GM12878 (cell line): ENCODE measurements at regions of chr11 and their contacts with region 1.

Region 1: GRCh38 chr11:110026858-110027626 is 66.2 kb upstream of the ZC3H12C start:
- DNase-seq: peak; percentile 99
- ATAC-seq: peak; percentile 87
- H3K4me3 ChIP-seq: peak overlapping the region; percentile 23; the same call in 1 of the 2 replicates
- H3K27ac ChIP-seq: peak overlapping the region; percentile 91
- H3K4me1 ChIP-seq: peaks cover 33% of the 10 kb centered on the region
- H3K27me3 ChIP-seq: no peaks in the 10 kb centered on the region
- CTCF ChIP-seq: no peak
- EP300 ChIP-seq: peak; percentile 99
- POLR2A ChIP-seq: no peak
- RAD21 ChIP-seq: peak; percentile 29; the same call in 1 of the 2 replicates

Region 2: DNA sequence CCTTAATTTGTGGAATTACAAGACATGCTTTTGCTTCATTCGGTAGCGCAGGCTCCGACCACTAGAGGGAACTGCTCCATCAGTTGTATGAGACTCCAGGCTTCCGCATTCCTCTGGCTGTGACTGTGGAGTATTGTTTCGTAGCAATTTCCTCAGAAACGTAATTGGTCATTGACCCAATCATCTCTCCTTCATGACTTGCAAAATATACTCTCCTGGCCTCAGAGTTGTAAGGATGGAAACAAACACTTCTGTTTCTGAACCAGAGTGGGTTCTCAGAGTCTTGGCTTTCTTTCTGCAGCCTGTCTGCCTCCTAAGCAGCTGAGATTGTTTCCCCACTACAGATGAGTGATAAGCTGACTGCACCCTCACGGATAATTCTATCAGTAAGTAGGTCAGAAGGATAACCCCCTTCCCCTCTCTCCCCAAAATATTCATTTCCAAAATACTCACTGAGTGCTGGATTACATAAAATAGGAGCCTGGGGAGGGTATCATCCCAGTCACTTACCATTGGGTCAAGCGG is 80.7 kb before region 1 on chr11:
- CTCF ChIA-PET with region 1: interaction called, 6 read pairs
- POLR2A ChIA-PET with region 1: interaction called, 4 read pairs
- RAD21 ChIA-PET with region 1: interaction called, 108 read pairs
- SMC1A ChIA-PET with region 1: interaction called, 30 read pairs
- in situ Hi-C with region 1: loop called (anchors 5 kb)
- intact Hi-C with region 1: loop called (anchors 1 kb)
- DNase-seq: peak; percentile 92
- ATAC-seq: peak; percentile 93
- H3K4me3 ChIP-seq: peak overlapping the region; percentile 50; the same call in 1 of the 2 replicates
- H3K27ac ChIP-seq: peak overlapping the region; percentile 83
- H3K4me1 ChIP-seq: peaks cover 6% of the 10 kb centered on the region; the same call in 1 of the 2 replicates
- H3K27me3 ChIP-seq: no peaks in the 10 kb centered on the region
- CTCF ChIP-seq: peak; percentile 93 to 98 (median 96)
- EP300 ChIP-seq: no peak
- POLR2A ChIP-seq: no peak
- RAD21 ChIP-seq: peak; percentile 97

Region 3: DNA sequence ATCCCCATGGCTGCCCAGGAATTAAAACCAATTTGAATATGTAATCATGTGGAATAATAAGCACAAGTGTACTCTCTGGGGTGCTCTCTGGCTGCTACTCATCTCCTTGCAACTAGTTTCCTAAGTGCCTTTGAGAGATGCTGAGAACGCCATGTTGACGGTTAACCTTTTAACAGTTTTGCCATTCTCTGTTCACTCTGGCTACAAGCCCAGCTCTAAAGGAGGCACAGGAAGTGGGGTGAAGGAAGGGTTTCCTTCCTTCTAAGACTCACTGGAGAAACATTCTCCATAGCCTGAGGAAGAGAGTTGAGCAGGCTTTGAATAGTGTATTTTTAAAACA is 55.9 kb before region 1 on chr11:
- CTCF ChIA-PET with region 1: interaction called, 22 read pairs
- POLR2A ChIA-PET with region 1: interaction called, 76 read pairs
- RAD21 ChIA-PET with region 1: interaction called, 118 read pairs
- SMC1A ChIA-PET with region 1: interaction called, 173 read pairs
- in situ Hi-C with region 1: no loop called
- intact Hi-C with region 1: loop called (anchors 1 kb)
- DNase-seq: no peak
- ATAC-seq: peak; percentile 32
- H3K4me3 ChIP-seq: peak overlapping the region; percentile 8; the same call in 1 of the 2 replicates
- H3K27ac ChIP-seq: peak overlapping the region; percentile 56
- H3K4me1 ChIP-seq: peaks cover 38% of the 10 kb centered on the region
- H3K27me3 ChIP-seq: no peaks in the 10 kb centered on the region
- CTCF ChIP-seq: no peak
- EP300 ChIP-seq: no peak
- POLR2A ChIP-seq: no peak
- RAD21 ChIP-seq: no peak

Region 4: DNA sequence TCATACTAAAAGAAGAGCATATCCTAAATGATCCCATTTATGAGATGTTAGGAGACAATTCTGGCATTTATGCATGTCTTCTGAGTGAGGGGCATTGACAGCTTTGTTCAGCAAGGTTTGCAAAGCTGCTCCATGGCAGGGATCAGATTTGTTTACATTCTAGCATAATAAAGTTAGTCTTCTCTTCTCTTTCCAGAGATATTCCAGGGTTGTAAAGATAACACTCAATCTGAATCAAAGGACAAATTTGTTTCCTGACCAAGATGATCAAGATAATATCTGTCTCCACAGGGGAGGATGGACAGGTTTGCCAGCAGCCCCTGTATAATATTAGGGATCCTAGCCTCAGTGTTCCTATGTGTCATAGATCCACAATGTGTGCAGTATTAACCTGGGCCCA is 11.3 kb before region 1 on chr11:
- CTCF ChIA-PET with region 1: interaction called, 4 read pairs
- POLR2A ChIA-PET with region 1: no interaction called
- RAD21 ChIA-PET with region 1: interaction called, 3 read pairs
- SMC1A ChIA-PET with region 1: interaction called, 11 read pairs
- in situ Hi-C with region 1: no loop called
- intact Hi-C with region 1: no loop called
- DNase-seq: no peak
- ATAC-seq: no peak
- H3K4me3 ChIP-seq: no peak overlapping the region
- H3K27ac ChIP-seq: no peak overlapping the region
- H3K4me1 ChIP-seq: no peaks in the 10 kb centered on the region
- H3K27me3 ChIP-seq: no peaks in the 10 kb centered on the region
- CTCF ChIP-seq: no peak
- EP300 ChIP-seq: no peak
- POLR2A ChIP-seq: no peak
- RAD21 ChIP-seq: no peak

Region 5: GRCh38 chr11:110061296-110061695 is 34.3 kb after region 1 on chr11:
- CTCF ChIA-PET with region 1: interaction called, 3 read pairs
- POLR2A ChIA-PET with region 1: interaction called, 3 read pairs
- RAD21 ChIA-PET with region 1: interaction called, 7 read pairs
- SMC1A ChIA-PET with region 1: interaction called, 10 read pairs
- in situ Hi-C with region 1: no loop called
- intact Hi-C with region 1: no loop called
- DNase-seq: no peak
- ATAC-seq: no peak
- H3K4me3 ChIP-seq: no peak overlapping the region
- H3K27ac ChIP-seq: no peak overlapping the region
- H3K4me1 ChIP-seq: no peaks in the 10 kb centered on the region
- H3K27me3 ChIP-seq: no peaks in the 10 kb centered on the region
- CTCF ChIP-seq: no peak
- EP300 ChIP-seq: no peak
- POLR2A ChIP-seq: no peak
- RAD21 ChIP-seq: no peak

Region 6: GRCh38 chr11:110092515-110093404 is 65.7 kb after region 1 on chr11 and contains the start of gene ZC3H12C:
- CTCF ChIA-PET with region 1: interaction called, 5 read pairs
- POLR2A ChIA-PET with region 1: interaction called, 22 read pairs
- RAD21 ChIA-PET with region 1: interaction called, 50 read pairs
- SMC1A ChIA-PET with region 1: interaction called, 214 read pairs
- in situ Hi-C with region 1: no loop called
- intact Hi-C with region 1: loop called (anchors 1 kb)
- DNase-seq: no peak
- ATAC-seq: peak; percentile 60
- H3K4me3 ChIP-seq: peak within 1 kb of the TSS; percentile 72
- H3K27ac ChIP-seq: peak within 1 kb of the TSS; percentile 75
- H3K4me1 ChIP-seq: peaks cover 21% of the 10 kb centered on the region
- H3K27me3 ChIP-seq: no peaks in the 10 kb centered on the region
- CTCF ChIP-seq: peak; percentile 19 to 44 (median 40); a peak in 5 of 6 replicates
- EP300 ChIP-seq: peak; percentile 58 to 63; a peak in 2 of 4 replicates
- POLR2A ChIP-seq: peak; percentile 80
- RAD21 ChIP-seq: peak; percentile 49
- polyA plus RNA-seq, gene ZC3H12C: 0.31 to 0.68 TPM

Region 7: DNA sequence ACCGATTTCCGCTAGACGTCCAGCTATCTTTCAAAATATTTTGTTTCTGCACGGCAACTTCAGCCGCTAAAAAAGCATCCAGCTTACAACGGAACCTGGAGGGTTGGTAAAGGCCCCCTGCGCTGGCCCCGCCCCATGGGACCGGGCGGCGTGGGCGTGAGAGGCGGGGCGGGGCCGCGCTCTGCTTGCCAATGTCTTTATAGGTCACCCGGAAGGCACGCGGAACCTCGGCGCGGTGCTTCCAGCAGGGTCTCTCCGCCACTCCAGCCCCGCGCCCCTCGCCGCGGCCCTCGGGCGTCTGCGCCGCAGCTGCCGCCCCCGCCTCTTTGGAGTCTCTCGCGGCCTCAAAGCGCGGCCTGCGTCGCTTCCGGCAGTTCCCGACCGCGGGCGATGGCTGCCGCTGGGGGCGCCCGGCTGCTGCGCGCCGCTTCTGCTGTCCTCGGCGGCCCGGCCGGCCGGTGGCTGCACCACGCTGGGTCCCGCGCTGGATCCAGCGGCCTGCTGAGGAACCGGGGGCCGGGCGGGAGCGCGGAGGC is 402.8 kb after region 1 on chr11 and contains the start of gene FDX1:
- CTCF ChIA-PET with region 1: interaction called, 3 read pairs
- POLR2A ChIA-PET with region 1: no interaction called
- RAD21 ChIA-PET with region 1: no interaction called
- SMC1A ChIA-PET with region 1: no interaction called
- in situ Hi-C with region 1: no loop called
- intact Hi-C with region 1: loop called (anchors 5 kb)
- DNase-seq: peak; percentile 23
- ATAC-seq: peak; percentile 92
- H3K4me3 ChIP-seq: peak within 1 kb of the TSS; percentile 67
- H3K27ac ChIP-seq: peak within 1 kb of the TSS; percentile 47
- H3K4me1 ChIP-seq: peaks cover 10% of the 10 kb centered on the region
- H3K27me3 ChIP-seq: no peaks in the 10 kb centered on the region
- CTCF ChIP-seq: peak; percentile 41 to 61 (median 42); a peak in 5 of 6 replicates
- EP300 ChIP-seq: no peak
- POLR2A ChIP-seq: peak; percentile 78
- RAD21 ChIP-seq: no peak
- polyA plus RNA-seq, gene FDX1: 3.9 to 9.6 TPM